Caco-2 (cell line): ENCODE measurements at regions of chr7 and their contacts with region 1.

Region 1: GRCh38 chr7:87564289-87564963 is 36.3 kb downstream of the ABCB1 start:
- DNase-seq: peak; percentile 72 to 84
- H3K4me3 ChIP-seq: no peak overlapping the region
- H3K4me3 Mint-ChIP-seq: no peak overlapping the region
- H3K27ac Mint-ChIP-seq: no peak overlapping the region
- H3K4me1 ChIP-seq: peaks cover 21% of the 10 kb centered on the region
- H3K4me1 Mint-ChIP-seq: peaks cover 7% of the 10 kb centered on the region
- H3K27me3 ChIP-seq: no peaks in the 10 kb centered on the region
- H3K27me3 Mint-ChIP-seq: no peaks in the 10 kb centered on the region
- CTCF ChIP-seq: peak; percentile 66 to 78

Region 2: GRCh38 chr7:87312215-87312865 is 252.1 kb before region 1 on chr7:
- CTCF ChIA-PET with region 1: no interaction called
- POLR2A ChIA-PET with region 1: no interaction called
- intact Hi-C with region 1: loop called (anchors 2 kb)
- DNase-seq: peak; percentile 56 to 73
- H3K4me3 ChIP-seq: no peak overlapping the region
- H3K4me3 Mint-ChIP-seq: no peak overlapping the region
- H3K27ac Mint-ChIP-seq: no peak overlapping the region
- H3K4me1 ChIP-seq: no peaks in the 10 kb centered on the region
- H3K4me1 Mint-ChIP-seq: peaks cover 5% of the 10 kb centered on the region
- H3K27me3 ChIP-seq: no peaks in the 10 kb centered on the region
- H3K27me3 Mint-ChIP-seq: no peaks in the 10 kb centered on the region
- CTCF ChIP-seq: peak; percentile 95 to 97

Region 3: DNA sequence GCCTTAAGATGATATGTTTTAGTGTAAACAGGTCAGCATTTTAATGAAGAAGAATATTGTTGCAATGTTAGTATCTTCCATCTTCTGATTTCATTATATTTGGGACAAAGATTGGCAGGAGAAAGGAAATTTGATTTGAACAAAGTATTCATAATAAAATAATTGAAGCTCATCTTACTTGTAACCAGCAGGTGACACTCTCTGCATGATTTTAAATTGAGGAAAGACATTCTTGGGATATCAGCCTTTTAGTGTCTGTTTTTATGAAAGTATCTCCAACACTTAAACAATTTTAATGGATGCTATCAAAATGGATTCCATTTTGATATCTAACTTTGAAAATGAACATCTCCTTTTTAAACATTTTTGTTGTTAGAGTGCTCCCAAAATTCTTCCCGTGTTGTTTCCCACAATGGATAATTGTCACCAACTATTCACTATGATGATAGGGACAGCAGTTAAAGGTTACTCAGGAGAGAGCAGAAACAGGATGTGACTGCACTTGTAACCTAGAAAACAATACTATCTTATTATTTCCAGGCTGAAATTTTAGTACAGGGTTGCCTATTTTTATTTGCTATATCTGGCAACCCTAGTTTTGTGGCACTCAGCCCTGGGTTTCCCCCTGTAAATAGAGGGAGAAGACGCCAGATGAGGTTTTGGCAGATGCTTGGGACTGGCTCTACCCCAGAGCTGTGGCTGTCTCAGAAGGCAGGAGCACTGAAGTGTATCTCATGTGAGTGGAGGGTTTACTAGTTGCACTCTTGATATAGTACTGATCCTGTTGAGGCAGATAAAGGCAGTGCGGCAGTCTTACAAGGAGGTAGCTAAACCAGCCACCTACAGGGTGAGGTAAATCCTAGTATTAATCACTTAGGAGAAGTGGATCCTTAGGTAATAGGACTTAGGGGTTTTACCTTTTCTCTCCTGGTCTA is 57.9 kb before region 1 on chr7:
- CTCF ChIA-PET with region 1: no interaction called
- POLR2A ChIA-PET with region 1: no interaction called
- intact Hi-C with region 1: loop called (anchors 1 kb)
- DNase-seq: no peak
- H3K4me3 ChIP-seq: no peak overlapping the region
- H3K4me3 Mint-ChIP-seq: no peak overlapping the region
- H3K27ac Mint-ChIP-seq: no peak overlapping the region
- H3K4me1 ChIP-seq: no peaks in the 10 kb centered on the region
- H3K4me1 Mint-ChIP-seq: no peaks in the 10 kb centered on the region
- H3K27me3 ChIP-seq: no peaks in the 10 kb centered on the region
- H3K27me3 Mint-ChIP-seq: no peaks in the 10 kb centered on the region
- CTCF ChIP-seq: peak; percentile 11 to 42

Region 4: DNA sequence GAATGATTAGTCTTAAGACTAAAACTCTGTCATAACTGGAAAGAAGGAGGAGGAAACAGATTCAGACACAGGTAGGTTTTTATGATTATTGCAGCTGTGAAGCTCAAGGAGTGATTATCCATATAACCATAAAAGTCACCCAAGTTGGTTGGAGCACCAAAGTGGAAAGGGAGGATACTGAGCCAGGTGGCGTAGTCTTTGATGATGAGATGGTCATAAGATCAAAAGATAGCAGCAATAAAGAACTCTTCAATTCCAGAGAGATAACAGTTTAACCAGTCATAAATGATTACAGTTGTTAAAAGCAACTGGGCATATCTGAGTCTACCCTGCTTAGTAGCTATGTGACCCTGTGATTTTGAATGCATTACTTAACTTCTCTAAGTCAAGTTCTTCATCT is 27.9 kb after region 1 on chr7:
- CTCF ChIA-PET with region 1: no interaction called
- POLR2A ChIA-PET with region 1: no interaction called
- intact Hi-C with region 1: loop called (anchors 2 kb)
- DNase-seq: peak; percentile 22 to 62
- H3K4me3 ChIP-seq: no peak overlapping the region
- H3K4me3 Mint-ChIP-seq: no peak overlapping the region
- H3K27ac Mint-ChIP-seq: no peak overlapping the region
- H3K4me1 ChIP-seq: peaks cover 15% of the 10 kb centered on the region
- H3K4me1 Mint-ChIP-seq: no peaks in the 10 kb centered on the region
- H3K27me3 ChIP-seq: no peaks in the 10 kb centered on the region; the same call in 1 of the 2 replicates
- H3K27me3 Mint-ChIP-seq: no peaks in the 10 kb centered on the region
- CTCF ChIP-seq: no peak

Region 5: DNA sequence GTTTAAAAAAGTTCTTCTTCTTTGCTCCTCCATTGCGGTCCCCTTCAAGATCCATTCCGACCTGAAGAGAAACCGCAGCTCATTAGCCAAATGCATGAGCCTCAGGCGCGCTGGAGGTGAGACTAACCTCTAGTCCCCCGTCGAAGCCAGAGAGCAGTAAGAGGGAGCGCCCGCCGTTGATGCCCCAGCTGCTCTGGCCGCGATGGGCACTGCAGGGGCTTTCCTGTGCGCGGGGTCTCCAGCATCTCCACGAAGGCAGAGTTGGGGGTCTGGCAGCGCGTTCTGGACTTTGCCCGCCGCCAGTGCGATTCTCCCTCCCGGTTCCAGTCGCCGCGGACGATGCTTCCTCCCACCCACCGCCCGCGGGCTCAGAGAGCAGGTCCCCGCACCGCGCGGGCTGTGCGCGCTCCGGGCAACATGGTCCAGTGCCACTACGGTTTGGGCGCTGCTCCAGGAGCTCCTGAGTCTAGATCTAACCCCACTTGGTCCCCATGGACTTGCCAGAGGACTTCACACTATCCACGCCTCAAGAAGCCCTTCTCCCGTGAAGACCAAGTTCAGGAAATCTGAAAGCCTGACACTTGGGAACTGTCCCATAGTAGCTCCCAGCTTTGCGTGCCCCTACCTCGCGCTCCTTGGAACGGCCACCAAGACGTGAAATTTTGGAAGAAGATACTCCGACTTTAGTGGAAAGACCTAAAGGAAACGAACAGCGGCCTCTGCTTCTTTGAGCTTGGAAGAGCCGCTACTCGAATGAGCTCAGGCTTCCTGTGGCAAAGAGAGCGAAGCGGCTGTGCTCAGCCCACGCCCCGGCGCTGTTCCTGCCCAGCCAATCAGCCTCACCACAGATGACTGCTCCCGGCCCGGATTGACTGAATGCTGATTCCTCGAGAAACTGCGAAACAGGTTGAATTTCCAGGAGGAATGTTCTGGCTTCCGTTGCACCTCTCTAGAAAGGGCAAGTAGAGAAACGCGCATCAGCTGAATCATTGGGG is 36.0 kb after region 1 on chr7 and contains the start of gene ABCB1:
- CTCF ChIA-PET with region 1: no interaction called
- POLR2A ChIA-PET with region 1: no interaction called
- intact Hi-C with region 1: loop called (anchors 1 kb)
- DNase-seq: peak; percentile 61 to 70
- H3K4me3 ChIP-seq: peak within 1 kb of the TSS; percentile 29
- H3K4me3 Mint-ChIP-seq: peak within 1 kb of the TSS; percentile 85
- H3K27ac Mint-ChIP-seq: no peak within 1 kb of the TSS
- H3K4me1 ChIP-seq: peaks cover 17% of the 10 kb centered on the region
- H3K4me1 Mint-ChIP-seq: peaks cover 19% of the 10 kb centered on the region
- H3K27me3 ChIP-seq: no peaks in the 10 kb centered on the region
- H3K27me3 Mint-ChIP-seq: peaks cover 21% of the 10 kb centered on the region
- CTCF ChIP-seq: no peak
- total RNA-seq, gene ABCB1: 34.6 and 37.3 TPM in 2 replicates

Region 6: DNA sequence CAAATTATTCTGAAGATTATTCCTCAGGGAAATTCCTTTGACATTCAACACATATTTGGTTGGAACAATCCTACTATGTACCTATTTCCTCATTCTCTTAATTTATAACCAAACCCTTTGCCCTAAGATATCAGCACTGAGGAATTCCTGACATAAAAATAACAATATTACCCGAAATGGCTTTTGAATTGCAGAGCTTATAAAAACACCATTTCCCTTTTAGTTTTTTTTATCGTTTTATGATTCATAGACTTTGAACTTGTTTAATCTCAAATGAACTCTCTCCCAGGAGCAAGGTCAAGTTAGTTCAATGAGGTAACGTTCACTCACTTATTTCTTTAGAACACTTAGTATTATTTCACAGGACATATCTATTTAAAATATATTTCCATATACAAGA is 44.0 kb after region 1 on chr7:
- CTCF ChIA-PET with region 1: no interaction called
- POLR2A ChIA-PET with region 1: no interaction called
- intact Hi-C with region 1: loop called (anchors 1 kb)
- DNase-seq: no peak
- H3K4me3 ChIP-seq: no peak overlapping the region
- H3K4me3 Mint-ChIP-seq: no peak overlapping the region
- H3K27ac Mint-ChIP-seq: no peak overlapping the region
- H3K4me1 ChIP-seq: peaks cover 24% of the 10 kb centered on the region
- H3K4me1 Mint-ChIP-seq: peaks cover 16% of the 10 kb centered on the region
- H3K27me3 ChIP-seq: no peaks in the 10 kb centered on the region
- H3K27me3 Mint-ChIP-seq: peaks cover 2% of the 10 kb centered on the region
- CTCF ChIP-seq: no peak

Region 7: DNA sequence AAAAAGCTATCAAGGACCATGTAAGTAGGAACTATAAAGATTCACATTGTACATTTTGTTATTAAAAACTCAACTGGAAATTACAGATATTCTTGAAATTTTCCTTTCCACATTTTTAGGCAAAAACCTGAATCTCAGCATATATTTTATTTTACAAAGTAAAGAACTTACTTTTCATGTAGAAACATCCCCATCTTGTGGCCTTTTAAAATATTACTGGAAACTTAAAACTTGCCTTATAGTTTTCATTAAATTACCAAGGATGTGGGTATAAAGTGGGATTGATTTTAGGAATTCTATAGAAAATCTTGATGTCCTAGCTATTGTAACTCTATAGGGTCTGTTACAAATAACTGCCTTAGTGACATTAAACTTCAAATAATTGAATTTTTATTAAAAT is 322.4 kb after region 1 on chr7:
- CTCF ChIA-PET with region 1: no interaction called
- POLR2A ChIA-PET with region 1: no interaction called
- intact Hi-C with region 1: no loop called
- DNase-seq: no peak
- H3K4me3 ChIP-seq: no peak overlapping the region
- H3K4me3 Mint-ChIP-seq: no peak overlapping the region
- H3K27ac Mint-ChIP-seq: no peak overlapping the region
- H3K4me1 ChIP-seq: no peaks in the 10 kb centered on the region
- H3K4me1 Mint-ChIP-seq: peaks cover 6% of the 10 kb centered on the region
- H3K27me3 ChIP-seq: no peaks in the 10 kb centered on the region
- H3K27me3 Mint-ChIP-seq: no peaks in the 10 kb centered on the region
- CTCF ChIP-seq: peak; percentile 33 to 55